ENCODE measurements at regions of chr19 and their contacts with region 1.

Region 1: DNA sequence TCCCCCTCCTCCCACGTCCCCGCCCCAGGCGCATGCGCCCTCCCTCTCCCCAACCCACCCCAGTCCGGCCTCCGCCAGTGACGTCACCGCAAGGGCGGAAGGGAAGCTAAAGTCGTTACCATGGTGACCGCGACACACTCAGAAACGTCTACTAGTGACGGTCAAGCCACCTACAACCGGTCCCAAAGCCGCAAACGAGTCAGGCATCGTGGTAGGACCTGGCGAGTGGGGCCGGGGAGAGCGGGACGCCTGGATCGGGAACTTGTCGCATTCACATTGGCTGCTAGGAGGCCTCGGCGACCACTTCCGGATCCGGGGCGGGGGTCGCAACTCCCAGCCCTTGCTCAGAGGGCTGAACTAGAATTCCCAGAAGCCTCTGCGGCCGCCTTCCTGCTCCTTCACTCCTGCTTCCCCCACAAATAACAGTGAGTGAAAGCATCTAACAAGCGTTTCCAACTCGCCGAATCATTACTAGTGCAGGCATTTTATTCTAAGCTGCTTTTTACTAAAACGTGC is at the start of gene ZSCAN5A:
- DNase-seq: peak; percentile 92
- H3K4me3 Mint-ChIP-seq: peak within 1 kb of the TSS; percentile 93
- H3K27ac Mint-ChIP-seq: peak within 1 kb of the TSS; percentile 99
- H3K4me1 Mint-ChIP-seq: peaks cover 29% of the 10 kb centered on the region
- H3K27me3 Mint-ChIP-seq: no peaks in the 10 kb centered on the region
- total RNA-seq, gene ZSCAN5A: 7.3 and 7.5 TPM in 2 replicates

Region 2: DNA sequence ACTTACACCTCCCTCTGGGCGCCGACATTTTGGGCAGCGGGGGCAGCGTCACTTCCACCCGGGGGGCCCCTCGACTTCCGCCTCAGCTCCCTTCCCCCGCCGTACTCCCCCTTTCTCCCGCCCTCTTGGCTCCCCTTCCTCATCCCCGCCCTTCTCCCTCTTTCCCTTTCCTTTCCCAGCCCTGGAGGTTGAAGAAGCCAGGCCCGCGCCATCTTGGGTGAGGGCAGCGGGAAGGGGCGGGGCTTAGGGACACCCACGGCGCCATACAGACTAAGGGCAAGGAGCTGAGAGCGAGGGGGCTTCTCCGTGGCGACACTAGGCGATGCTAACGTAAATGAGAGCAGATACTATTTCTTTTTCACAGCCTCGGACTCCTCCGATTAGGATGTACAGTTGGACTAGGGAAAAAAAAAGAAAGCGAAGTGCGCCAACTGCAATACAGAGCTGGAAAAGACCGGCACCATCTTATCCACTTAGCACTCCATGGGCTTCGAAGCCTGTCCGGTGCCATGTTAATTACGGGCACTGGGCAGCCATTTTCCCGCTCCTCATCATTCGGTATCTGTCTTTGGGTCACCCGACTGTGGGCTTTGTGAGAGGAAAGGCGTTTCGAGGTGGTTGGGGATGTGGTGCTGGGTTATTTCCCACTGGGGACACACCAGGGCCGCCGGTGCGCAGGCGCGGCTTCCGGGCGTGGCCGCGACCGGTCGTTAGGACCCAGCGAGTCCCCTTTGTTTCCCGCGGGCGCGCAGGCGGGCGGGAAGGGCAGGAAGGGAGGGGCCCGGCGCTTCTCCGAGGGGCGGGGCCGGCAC is 714.9 kb before region 1 on chr19 and contains the start of gene FIZ1:
- intact Hi-C with region 1: loop called (anchors 1 kb)
- DNase-seq: peak; percentile 95
- H3K4me3 Mint-ChIP-seq: peak within 1 kb of the TSS; percentile 93
- H3K27ac Mint-ChIP-seq: peak within 1 kb of the TSS; percentile 98
- H3K4me1 Mint-ChIP-seq: peaks cover 28% of the 10 kb centered on the region
- H3K27me3 Mint-ChIP-seq: no peaks in the 10 kb centered on the region
- total RNA-seq, gene FIZ1: 24.2 and 24.7 TPM in 2 replicates

Region 3: GRCh38 chr19:55653758-55654539 is 660.7 kb before region 1 on chr19:
- intact Hi-C with region 1: loop called (anchors 1 kb)
- DNase-seq: peak; percentile 99
- H3K4me3 Mint-ChIP-seq: peak overlapping the region; percentile 93
- H3K27ac Mint-ChIP-seq: peak overlapping the region; percentile 99
- H3K4me1 Mint-ChIP-seq: peaks cover 43% of the 10 kb centered on the region
- H3K27me3 Mint-ChIP-seq: no peaks in the 10 kb centered on the region

Region 4: GRCh38 chr19:56121180-56122167 is 193.1 kb before region 1 on chr19 and contains the start of gene ZNF787:
- intact Hi-C with region 1: loop called (anchors 1 kb)
- DNase-seq: peak; percentile 97
- H3K4me3 Mint-ChIP-seq: peak within 1 kb of the TSS; percentile 89
- H3K27ac Mint-ChIP-seq: peak within 1 kb of the TSS; percentile 97
- H3K4me1 Mint-ChIP-seq: peaks cover 28% of the 10 kb centered on the region
- H3K27me3 Mint-ChIP-seq: no peaks in the 10 kb centered on the region
- total RNA-seq, gene ZNF787: 41.8 and 42.6 TPM in 2 replicates

Region 5: DNA sequence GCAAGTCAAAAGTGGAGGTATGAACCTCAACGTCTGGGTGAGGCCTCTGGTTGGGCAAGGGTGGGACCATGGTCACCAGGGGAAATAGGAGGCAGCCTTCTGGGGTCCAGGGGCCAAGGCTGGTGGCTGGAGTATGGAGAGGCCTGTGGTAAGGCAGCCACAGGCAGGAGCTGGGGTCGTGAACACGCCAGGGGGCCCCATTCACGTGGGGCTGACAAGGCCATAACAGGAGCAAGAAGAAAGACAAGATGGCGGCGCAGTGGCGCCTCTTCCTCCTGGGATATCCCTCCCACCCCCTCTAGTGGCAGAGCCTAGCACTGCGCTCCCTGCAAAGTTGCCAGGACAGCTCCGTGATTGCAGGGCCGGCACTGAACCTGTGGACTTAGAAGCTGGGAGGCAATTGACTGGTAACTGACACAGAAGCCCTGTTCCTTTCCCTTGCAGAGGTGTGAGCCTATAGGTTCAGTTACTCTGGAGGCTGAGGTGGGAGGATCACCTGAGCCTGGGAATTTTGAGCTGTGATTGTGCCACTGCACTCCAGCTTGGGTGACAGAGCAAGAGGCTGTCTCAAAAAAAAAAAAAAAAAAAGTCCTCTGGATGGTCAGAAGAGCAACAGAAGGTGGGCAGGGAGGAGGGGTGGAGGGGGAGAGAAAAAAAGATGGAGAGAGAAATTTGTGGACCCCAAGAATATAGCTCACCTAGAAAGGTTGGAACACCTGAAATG is 61.8 kb before region 1 on chr19:
- intact Hi-C with region 1: loop called (anchors 2 kb)
- DNase-seq: peak; percentile 45
- H3K4me3 Mint-ChIP-seq: no peak overlapping the region
- H3K27ac Mint-ChIP-seq: no peak overlapping the region
- H3K4me1 Mint-ChIP-seq: no peaks in the 10 kb centered on the region
- H3K27me3 Mint-ChIP-seq: no peaks in the 10 kb centered on the region

Region 6: GRCh38 chr19:56393119-56394012 is 78.7 kb after region 1 on chr19 and contains the start of gene ZNF582:
- intact Hi-C with region 1: loop called (anchors 1 kb)
- DNase-seq: peak; percentile 82
- H3K4me3 Mint-ChIP-seq: peak within 1 kb of the TSS; percentile 94
- H3K27ac Mint-ChIP-seq: peak within 1 kb of the TSS; percentile 90
- H3K4me1 Mint-ChIP-seq: peaks cover 7% of the 10 kb centered on the region
- H3K27me3 Mint-ChIP-seq: peaks cover 1% of the 10 kb centered on the region
- total RNA-seq, gene ZNF582: 1.2 and 1.3 TPM in 2 replicates

Region 7: GRCh38 chr19:56567274-56568120 is 252.9 kb after region 1 on chr19 and contains the start of gene ZNF470:
- intact Hi-C with region 1: loop called (anchors 2 kb)
- DNase-seq: peak; percentile 82
- H3K4me3 Mint-ChIP-seq: peak within 1 kb of the TSS; percentile 87
- H3K27ac Mint-ChIP-seq: peak within 1 kb of the TSS; percentile 89
- H3K4me1 Mint-ChIP-seq: no peaks in the 10 kb centered on the region
- H3K27me3 Mint-ChIP-seq: no peaks in the 10 kb centered on the region
- total RNA-seq, gene ZNF470: 1.2 and 2.4 TPM in 2 replicates

Measured in activated T-helper 1 cell treated with anti-CD3 and anti-CD28 coated beads, Interleukin-12 subunit alpha, Interleukin-12 subunit beta, Interleukin-2, Interleukin-4 antibody, amounts not matched to agents 30 ng/mL and 10 ng/mL and 1 ng/mL, durations not matched to agents 14 hours and 24 hours and 36 hours (primary cell).